ENCODE measurements at regions of chr1 and their contacts with region 1.

Region 1: DNA sequence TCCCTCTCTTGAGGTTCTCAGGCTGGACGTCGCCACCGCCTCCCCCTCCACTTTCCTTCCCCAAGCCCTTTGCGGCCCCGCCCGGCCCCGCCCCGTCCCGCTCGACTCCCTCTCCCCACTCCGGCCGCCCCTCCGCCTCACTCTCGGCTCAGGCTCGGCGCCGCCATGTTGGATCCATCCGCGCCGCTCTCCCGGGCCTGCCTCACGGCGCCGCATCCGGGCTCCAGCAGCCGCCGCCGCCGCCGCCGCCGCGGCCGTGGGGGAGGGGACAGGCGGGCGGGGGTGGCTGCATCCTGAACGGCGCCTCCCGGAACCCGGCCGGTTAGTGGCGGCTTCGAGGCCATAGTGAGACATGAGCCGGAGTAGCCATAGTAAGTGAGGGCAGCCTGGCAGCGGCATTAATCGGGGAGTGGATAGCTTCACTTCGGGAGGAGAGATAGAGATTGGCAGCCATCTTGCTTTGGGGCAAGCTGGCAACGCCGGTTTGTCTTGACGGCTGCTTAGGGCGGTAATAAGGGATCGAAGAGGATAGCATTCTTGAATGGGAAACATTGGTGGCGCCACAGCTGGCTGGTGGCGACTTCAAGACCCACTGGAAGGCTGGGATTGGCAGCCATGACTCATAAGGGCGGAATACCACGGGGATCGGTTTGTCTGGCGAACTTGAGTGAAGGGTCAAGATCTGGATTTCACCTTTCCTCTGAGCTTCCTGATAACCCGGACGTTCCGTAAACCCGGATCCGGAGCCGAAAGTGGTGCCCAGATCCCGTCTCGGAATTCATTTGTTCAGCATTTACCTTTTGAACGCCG is at the start of gene DEDD:
- DNase-seq: peak; percentile 96
- H3K4me3 Mint-ChIP-seq: no peak within 1 kb of the TSS
- H3K27ac Mint-ChIP-seq: no peak within 1 kb of the TSS
- H3K4me1 Mint-ChIP-seq: peaks cover 44% of the 10 kb centered on the region
- H3K27me3 Mint-ChIP-seq: no peaks in the 10 kb centered on the region
- total RNA-seq, gene DEDD: 45.7 and 46.2 TPM in 2 replicates

Region 2: DNA sequence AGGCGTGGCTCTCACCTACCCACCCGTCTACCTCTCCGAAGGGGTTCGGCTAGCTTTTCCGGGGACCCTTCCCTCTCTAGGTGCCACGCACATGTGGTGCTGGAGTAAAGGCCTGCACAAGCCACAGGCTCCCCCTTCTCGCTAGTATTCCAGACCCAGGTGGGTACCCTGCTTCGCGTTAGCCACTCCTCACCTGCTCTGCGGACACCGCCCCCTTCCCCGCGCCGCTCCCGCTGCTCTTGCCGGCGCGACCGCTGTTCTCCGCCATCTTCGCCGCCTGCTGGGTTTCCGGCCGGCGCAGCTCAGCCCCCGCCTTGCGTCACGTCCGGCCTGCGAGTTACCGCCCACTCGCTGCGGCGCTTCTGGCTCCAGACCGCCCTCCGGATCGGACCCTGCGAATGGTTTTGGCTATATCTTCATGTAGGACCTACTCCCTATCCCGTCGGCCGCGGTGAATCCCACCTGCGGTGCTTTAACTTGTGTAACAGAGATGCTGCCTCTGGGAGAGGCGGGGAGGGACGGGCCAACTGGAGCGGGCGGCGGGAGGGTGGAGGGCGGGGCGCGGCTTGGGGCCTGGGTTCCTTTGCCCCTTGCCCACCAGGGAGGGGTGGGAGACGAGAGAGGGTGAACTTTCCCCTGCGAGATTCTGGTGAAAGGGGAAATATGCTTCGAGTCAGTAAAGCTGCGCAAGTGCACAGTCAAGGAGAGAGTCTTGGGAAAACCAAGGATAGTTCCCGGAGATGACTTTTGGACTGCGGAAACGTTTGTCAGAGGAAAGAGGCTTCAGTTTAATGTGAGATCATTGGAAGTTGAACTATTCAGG is 14.6 kb before region 1 on chr1 and contains the starts of genes NIT1 and PFDN2:
- intact Hi-C with region 1: loop called (anchors 1 kb)
- DNase-seq: peak; percentile 97
- H3K4me3 Mint-ChIP-seq: peak within 1 kb of the TSS; percentile 98
- H3K27ac Mint-ChIP-seq: peak within 1 kb of the TSS; percentile 92
- H3K4me1 Mint-ChIP-seq: peaks cover 61% of the 10 kb centered on the region
- H3K27me3 Mint-ChIP-seq: no peaks in the 10 kb centered on the region
- total RNA-seq, gene NIT1: 46.7 and 48.2 TPM in 2 replicates
- total RNA-seq, gene PFDN2: 173 and 178 TPM in 2 replicates

Region 3: GRCh38 chr1:161153679-161154426 is 21.2 kb after region 1 on chr1 and contains the start of gene UFC1:
- intact Hi-C with region 1: loop called (anchors 1 kb)
- DNase-seq: peak; percentile 95
- H3K4me3 Mint-ChIP-seq: peak within 1 kb of the TSS; percentile 97
- H3K27ac Mint-ChIP-seq: peak within 1 kb of the TSS; percentile 100
- H3K4me1 Mint-ChIP-seq: peaks cover 23% of the 10 kb centered on the region
- H3K27me3 Mint-ChIP-seq: no peaks in the 10 kb centered on the region
- total RNA-seq, gene UFC1: 84.2 and 86.6 TPM in 2 replicates

Region 4: GRCh38 chr1:161165742-161166668 is 33.4 kb after region 1 on chr1 and contains the start of gene PPOX:
- intact Hi-C with region 1: loop called (anchors 1 kb)
- DNase-seq: peak; percentile 98
- H3K4me3 Mint-ChIP-seq: peak within 1 kb of the TSS; percentile 83
- H3K27ac Mint-ChIP-seq: peak within 1 kb of the TSS; percentile 98
- H3K4me1 Mint-ChIP-seq: peaks cover 45% of the 10 kb centered on the region
- H3K27me3 Mint-ChIP-seq: no peaks in the 10 kb centered on the region
- total RNA-seq, gene PPOX: 28.6 and 31.1 TPM in 2 replicates

Region 5: DNA sequence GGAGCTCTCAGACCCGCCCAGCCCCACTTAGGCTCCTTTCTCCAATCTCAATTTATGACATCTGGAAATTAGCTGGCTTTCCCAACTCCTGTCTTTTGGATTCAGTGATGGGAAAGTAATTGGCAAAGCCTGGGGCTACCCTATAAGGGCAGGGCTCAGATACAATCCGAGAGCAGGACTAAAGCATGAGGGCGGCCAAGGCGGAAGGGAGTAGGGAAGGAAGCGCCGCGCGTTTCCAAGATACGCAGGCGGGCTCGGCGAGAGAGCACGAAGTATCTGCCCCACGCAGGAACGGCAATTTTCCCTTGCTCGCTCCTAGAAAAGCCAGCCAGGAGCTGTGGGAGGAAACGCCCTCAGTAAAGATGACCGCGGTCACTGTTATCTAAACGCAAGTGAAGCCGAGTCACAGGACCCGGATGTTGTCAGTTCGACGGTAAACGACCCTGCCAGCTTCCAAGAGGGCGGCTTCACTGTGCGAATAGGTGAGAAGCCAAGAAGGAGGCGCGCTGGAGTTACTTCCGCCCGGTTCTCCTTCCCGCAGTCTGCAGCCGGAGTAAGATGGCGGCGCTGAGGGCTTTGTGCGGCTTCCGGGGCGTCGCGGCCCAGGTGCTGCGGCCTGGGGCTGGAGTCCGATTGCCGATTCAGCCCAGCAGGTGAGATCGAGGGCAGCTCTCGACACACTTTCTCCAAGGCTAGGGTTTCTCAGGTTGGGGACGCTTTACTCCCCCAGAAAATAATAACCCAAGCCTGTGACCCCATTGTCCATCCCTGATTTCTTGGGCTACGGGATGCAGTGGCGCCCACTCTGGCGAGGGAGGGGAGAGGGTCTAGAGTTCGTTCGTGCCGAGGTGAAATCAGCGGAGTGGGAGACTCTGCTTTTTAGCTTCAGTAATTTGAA is 69.5 kb after region 1 on chr1 and contains the start of gene NDUFS2:
- intact Hi-C with region 1: loop called (anchors 2 kb)
- DNase-seq: peak; percentile 98
- H3K4me3 Mint-ChIP-seq: peak within 1 kb of the TSS; percentile 94
- H3K27ac Mint-ChIP-seq: peak within 1 kb of the TSS; percentile 96
- H3K4me1 Mint-ChIP-seq: peaks cover 61% of the 10 kb centered on the region
- H3K27me3 Mint-ChIP-seq: no peaks in the 10 kb centered on the region
- total RNA-seq, gene NDUFS2: 88.4 and 89.6 TPM in 2 replicates

Region 6: GRCh38 chr1:161238039-161238473 is 105.4 kb after region 1 on chr1 and contains the start of gene NR1I3:
- intact Hi-C with region 1: no loop called
- DNase-seq: no peak
- H3K4me3 Mint-ChIP-seq: no peak within 1 kb of the TSS
- H3K27ac Mint-ChIP-seq: no peak within 1 kb of the TSS
- H3K4me1 Mint-ChIP-seq: no peaks in the 10 kb centered on the region
- H3K27me3 Mint-ChIP-seq: peaks cover 20% of the 10 kb centered on the region
- total RNA-seq, gene NR1I3: not detected in 2 replicates

Measured in activated CD4-positive, alpha-beta T cell treated with anti-CD3 and anti-CD28 coated beads, Interleukin-2, amount 10 ng/mL, durations not matched to agents 24 days and 14 days (primary cell).